ENCODE measurements at regions of chr11 and their contacts with region 1.

Region 1: DNA sequence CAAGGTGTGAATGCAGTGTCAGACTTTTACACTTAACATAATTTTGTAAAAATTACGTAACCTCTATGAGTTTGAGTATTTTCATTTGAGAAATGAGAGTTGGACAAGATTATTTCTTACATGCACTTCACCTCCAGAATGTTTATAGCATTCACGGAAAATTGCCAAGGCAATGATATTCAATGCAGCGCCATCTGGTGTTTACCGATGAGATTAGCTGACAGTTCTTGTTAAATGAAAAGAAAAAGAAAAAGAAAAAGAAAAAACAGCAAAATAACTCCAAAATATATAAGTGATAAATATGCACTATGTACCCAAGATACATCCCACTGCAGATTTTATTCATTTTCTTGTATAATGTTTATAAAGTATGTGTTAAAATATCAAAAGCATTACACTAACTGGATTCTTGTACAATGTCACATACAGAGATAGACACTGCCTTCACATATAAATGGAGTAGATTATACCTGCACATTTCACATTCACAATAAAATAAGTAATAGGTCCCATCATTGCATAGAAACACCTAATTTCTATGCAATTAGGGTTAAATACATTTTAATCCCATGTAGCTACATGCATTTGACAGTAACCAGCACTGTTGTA is 976.3 kb upstream of the FAT3 start:
- DNase-seq: peak; percentile 30
- H3K4me3 Mint-ChIP-seq: no peak overlapping the region
- H3K27ac Mint-ChIP-seq: no peak overlapping the region
- H3K4me1 Mint-ChIP-seq: no peaks in the 10 kb centered on the region
- H3K27me3 Mint-ChIP-seq: no peaks in the 10 kb centered on the region

Region 2: DNA sequence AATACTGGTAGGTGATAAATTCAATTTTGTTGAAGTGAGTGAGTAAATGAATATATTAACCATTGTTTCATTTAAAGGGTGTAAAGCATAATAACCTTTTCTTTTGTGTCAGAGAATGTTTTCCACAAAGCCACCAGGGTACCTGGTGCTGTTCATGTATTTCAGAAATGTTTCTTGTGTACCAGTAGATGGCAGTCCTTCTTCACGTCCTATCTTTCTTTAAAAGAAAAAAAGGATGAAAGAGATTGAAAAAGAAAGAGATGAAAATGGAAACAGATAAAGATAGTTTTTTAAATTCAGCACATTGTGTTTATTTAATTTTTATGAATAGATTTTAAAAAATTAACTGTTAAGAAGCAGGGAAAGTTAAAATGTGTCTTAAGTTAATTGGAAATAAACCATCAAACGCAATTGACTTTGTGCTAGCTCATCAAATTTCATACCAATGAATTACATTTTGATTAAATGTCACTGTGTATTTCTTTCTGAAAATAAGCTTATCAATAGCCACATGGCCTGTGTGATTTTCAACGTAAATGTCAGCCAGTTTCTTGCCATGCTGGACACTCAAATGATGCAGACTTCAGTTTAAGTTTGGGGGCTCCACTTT is 960.0 kb before region 1 on chr11:
- CTCF ChIA-PET with region 1: no interaction called
- intact Hi-C with region 1: loop called (anchors 1 kb)
- DNase-seq: no peak
- H3K4me3 Mint-ChIP-seq: no peak overlapping the region
- H3K27ac Mint-ChIP-seq: no peak overlapping the region
- H3K4me1 Mint-ChIP-seq: no peaks in the 10 kb centered on the region
- H3K27me3 Mint-ChIP-seq: peaks cover 7% of the 10 kb centered on the region

Region 3: GRCh38 chr11:90476442-90477007 is 771.8 kb before region 1 on chr11:
- CTCF ChIA-PET with region 1: no interaction called
- intact Hi-C with region 1: loop called (anchors 5 kb)
- DNase-seq: peak; percentile 64
- H3K4me3 Mint-ChIP-seq: no peak overlapping the region
- H3K27ac Mint-ChIP-seq: no peak overlapping the region
- H3K4me1 Mint-ChIP-seq: no peaks in the 10 kb centered on the region
- H3K27me3 Mint-ChIP-seq: no peaks in the 10 kb centered on the region

Region 4: DNA sequence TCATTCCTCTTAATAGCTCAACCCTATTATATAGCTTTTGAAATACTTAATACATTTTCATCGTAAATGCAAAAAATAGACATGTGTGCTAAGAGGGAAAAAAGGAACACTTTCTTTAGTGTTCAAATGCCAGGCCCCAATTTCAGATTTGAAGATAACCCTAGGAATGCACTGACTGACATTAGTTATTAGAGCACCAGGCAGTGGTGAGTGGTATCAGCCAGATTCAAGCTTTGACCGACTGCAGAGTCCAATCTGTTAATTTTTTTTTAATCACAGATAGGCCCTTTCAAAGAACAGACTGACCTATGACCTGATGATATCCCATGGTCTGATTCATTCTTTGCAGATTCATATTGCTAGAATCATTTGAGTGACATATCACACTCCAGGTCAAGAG is 151.2 kb before region 1 on chr11:
- CTCF ChIA-PET with region 1: no interaction called
- intact Hi-C with region 1: no loop called
- DNase-seq: no peak
- H3K4me3 Mint-ChIP-seq: no peak overlapping the region
- H3K27ac Mint-ChIP-seq: no peak overlapping the region
- H3K4me1 Mint-ChIP-seq: no peaks in the 10 kb centered on the region
- H3K27me3 Mint-ChIP-seq: no peaks in the 10 kb centered on the region

Region 5: DNA sequence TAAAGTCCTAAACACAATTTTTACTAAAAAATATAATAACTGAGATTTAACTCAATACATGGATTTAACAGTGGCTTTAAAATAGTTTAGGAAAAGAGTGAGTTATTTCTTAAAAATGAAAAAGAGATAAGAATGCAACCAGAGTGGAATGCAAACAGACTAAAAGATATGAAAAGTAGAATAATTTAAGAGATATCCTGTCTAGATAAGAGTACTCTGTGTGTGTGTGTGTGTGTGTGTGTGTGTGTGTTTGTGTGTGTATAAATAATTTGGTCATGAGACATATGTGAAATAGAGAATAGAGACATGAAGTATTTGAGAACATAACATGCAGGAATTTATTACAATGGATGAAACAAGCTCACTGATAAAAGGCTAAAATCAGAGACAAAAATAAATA is 38.6 kb before region 1 on chr11:
- CTCF ChIA-PET with region 1: no interaction called
- intact Hi-C with region 1: no loop called
- DNase-seq: no peak
- H3K4me3 Mint-ChIP-seq: no peak overlapping the region
- H3K27ac Mint-ChIP-seq: no peak overlapping the region
- H3K4me1 Mint-ChIP-seq: no peaks in the 10 kb centered on the region
- H3K27me3 Mint-ChIP-seq: no peaks in the 10 kb centered on the region